ENCODE measurements at regions of chr20 and their contacts with region 1.

Region 1: DNA sequence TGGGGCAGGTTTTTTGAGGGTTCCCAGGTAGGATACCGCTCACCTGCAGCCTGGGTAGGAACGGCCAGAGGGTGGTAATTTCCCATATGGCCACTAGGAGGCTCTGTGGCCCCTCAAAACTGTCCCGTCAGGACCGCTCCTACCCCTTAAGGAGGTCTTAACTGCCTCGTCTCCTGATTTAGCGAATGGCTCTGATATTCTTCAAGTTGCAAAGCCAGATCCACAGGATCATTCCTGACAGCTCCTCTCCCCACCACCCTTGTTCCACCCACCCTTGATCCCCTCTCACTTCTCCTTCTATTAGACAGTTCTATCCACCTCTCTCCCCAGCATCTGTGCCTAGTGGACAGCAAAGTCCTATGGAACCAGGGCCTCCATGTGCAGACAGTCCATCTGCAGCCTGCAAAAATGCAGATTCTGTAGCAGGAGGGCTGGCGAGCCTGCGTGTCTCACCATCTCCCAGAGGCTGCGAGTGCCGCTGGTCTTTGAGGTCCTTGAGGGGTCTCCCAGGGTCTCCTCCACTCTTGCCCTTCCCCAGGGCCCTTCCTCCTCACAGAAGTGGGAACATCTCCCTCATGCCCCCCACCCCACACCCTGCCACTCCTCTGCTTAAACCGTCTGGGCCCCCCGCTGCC is 34.3 kb upstream of the ZBP1 start:
- DNase-seq: peak; percentile 75
- ATAC-seq: peak; percentile 81
- H3K4me3 Mint-ChIP-seq: no peak overlapping the region
- H3K27ac Mint-ChIP-seq: no peak overlapping the region
- H3K4me1 Mint-ChIP-seq: peaks cover 20% of the 10 kb centered on the region
- H3K27me3 Mint-ChIP-seq: no peaks in the 10 kb centered on the region

Region 2: GRCh38 chr20:58087193-58087858 is 432.8 kb after region 1 on chr20:
- CTCF ChIA-PET with region 1: interaction called, 10 read pairs
- POLR2A ChIA-PET with region 1: no interaction called
- intact Hi-C with region 1: loop called (anchors 1 kb)
- DNase-seq: peak; percentile 47
- ATAC-seq: no peak
- H3K4me3 Mint-ChIP-seq: no peak overlapping the region
- H3K27ac Mint-ChIP-seq: no peak overlapping the region
- H3K4me1 Mint-ChIP-seq: no peaks in the 10 kb centered on the region
- H3K27me3 Mint-ChIP-seq: peaks cover 10% of the 10 kb centered on the region

Region 3: GRCh38 chr20:58179432-58180099 is 525.1 kb after region 1 on chr20:
- CTCF ChIA-PET with region 1: interaction called, 3 read pairs
- POLR2A ChIA-PET with region 1: no interaction called
- intact Hi-C with region 1: loop called (anchors 1 to 2 kb)
- DNase-seq: peak; percentile 79
- ATAC-seq: peak; percentile 94
- H3K4me3 Mint-ChIP-seq: peak overlapping the region; percentile 18
- H3K27ac Mint-ChIP-seq: no peak overlapping the region
- H3K4me1 Mint-ChIP-seq: peaks cover 10% of the 10 kb centered on the region
- H3K27me3 Mint-ChIP-seq: peaks cover 13% of the 10 kb centered on the region

Region 4: GRCh38 chr20:58209652-58210397 is 555.3 kb after region 1 on chr20:
- CTCF ChIA-PET with region 1: interaction called, 3 read pairs
- POLR2A ChIA-PET with region 1: no interaction called
- intact Hi-C with region 1: loop called (anchors 1 to 10 kb)
- DNase-seq: peak; percentile 94
- ATAC-seq: peak; percentile 85
- H3K4me3 Mint-ChIP-seq: no peak overlapping the region
- H3K27ac Mint-ChIP-seq: peak overlapping the region; percentile 6
- H3K4me1 Mint-ChIP-seq: no peaks in the 10 kb centered on the region
- H3K27me3 Mint-ChIP-seq: peaks cover 10% of the 10 kb centered on the region